ENCODE measurements at regions of chr14 and their contacts with region 1.

Region 1: GRCh38 chr14:67571272-67571850 is 28.7 kb downstream of the PIGH start:
- DNase-seq: peak; percentile 84
- H3K4me3 Mint-ChIP-seq: no peak overlapping the region
- H3K27ac Mint-ChIP-seq: no peak overlapping the region
- H3K4me1 Mint-ChIP-seq: no peaks in the 10 kb centered on the region
- H3K27me3 Mint-ChIP-seq: no peaks in the 10 kb centered on the region

Region 2: DNA sequence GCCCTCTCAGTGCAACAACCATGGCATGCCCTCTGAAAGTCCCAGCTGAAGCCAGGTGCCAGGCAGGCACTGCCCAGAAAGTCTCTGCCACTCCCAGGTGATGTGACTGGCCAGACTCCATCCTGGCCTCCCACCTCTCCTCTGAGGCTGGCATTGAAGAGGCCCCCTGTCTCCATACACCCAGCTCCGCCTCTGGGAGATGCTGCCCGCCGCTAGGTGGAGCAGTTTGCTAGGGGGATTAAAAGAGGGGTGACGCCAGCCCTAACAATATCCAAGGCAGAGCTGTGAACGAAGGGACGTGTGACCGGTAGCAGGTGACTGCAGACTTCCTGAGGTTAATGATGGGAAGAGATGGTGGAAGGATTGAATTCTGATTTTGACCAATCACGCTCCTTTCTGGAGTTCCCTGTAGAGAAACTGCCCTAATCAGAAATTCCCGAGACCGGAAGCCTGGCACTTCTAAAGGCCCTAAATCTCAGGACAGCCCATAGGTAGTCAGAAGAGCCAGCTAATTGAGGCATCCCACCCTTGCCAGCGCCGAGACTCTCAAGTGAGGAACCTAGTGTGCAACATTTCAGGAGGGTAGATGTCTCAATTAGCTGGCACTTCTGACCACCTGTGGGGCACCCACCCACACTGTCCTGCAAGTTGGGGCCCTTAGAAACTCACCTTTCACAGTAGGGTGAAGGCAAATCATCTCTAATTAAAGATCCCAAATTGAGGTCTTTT is 151.1 kb before region 1 on chr14:
- CTCF ChIA-PET with region 1: interaction called, 191 read pairs
- intact Hi-C with region 1: no loop called
- DNase-seq: peak; percentile 57
- H3K4me3 Mint-ChIP-seq: no peak overlapping the region
- H3K27ac Mint-ChIP-seq: no peak overlapping the region
- H3K4me1 Mint-ChIP-seq: no peaks in the 10 kb centered on the region
- H3K27me3 Mint-ChIP-seq: peaks cover 5% of the 10 kb centered on the region

Region 3: DNA sequence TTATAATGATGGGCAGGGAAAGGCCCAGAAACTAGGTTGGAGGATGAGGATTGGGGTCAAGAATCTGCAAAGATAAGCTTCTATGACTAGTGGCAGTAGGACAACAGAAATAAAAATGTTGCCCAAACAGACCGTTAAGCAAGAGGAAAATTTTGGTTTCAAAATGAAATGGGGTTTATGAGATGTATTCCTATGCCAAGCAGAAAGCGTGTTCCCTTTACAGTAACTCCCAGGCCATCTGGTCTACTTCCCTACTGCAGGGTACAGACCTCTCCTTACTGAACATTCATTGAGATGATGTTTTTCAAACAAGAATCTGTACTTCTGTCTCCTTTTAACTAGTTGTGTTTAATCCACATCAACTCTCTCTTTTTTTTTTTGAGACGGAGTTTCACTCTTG is 62.4 kb before region 1 on chr14:
- CTCF ChIA-PET with region 1: interaction called, 10 read pairs
- intact Hi-C with region 1: no loop called
- DNase-seq: no peak
- H3K4me3 Mint-ChIP-seq: no peak overlapping the region
- H3K27ac Mint-ChIP-seq: no peak overlapping the region
- H3K4me1 Mint-ChIP-seq: peaks cover 5% of the 10 kb centered on the region
- H3K27me3 Mint-ChIP-seq: no peaks in the 10 kb centered on the region

Region 4: GRCh38 chr14:67557126-67557525 is 14.2 kb before region 1 on chr14:
- CTCF ChIA-PET with region 1: interaction called, 14 read pairs
- intact Hi-C with region 1: no loop called
- DNase-seq: no peak
- H3K4me3 Mint-ChIP-seq: no peak overlapping the region
- H3K27ac Mint-ChIP-seq: no peak overlapping the region
- H3K4me1 Mint-ChIP-seq: no peaks in the 10 kb centered on the region
- H3K27me3 Mint-ChIP-seq: no peaks in the 10 kb centered on the region

Region 5: DNA sequence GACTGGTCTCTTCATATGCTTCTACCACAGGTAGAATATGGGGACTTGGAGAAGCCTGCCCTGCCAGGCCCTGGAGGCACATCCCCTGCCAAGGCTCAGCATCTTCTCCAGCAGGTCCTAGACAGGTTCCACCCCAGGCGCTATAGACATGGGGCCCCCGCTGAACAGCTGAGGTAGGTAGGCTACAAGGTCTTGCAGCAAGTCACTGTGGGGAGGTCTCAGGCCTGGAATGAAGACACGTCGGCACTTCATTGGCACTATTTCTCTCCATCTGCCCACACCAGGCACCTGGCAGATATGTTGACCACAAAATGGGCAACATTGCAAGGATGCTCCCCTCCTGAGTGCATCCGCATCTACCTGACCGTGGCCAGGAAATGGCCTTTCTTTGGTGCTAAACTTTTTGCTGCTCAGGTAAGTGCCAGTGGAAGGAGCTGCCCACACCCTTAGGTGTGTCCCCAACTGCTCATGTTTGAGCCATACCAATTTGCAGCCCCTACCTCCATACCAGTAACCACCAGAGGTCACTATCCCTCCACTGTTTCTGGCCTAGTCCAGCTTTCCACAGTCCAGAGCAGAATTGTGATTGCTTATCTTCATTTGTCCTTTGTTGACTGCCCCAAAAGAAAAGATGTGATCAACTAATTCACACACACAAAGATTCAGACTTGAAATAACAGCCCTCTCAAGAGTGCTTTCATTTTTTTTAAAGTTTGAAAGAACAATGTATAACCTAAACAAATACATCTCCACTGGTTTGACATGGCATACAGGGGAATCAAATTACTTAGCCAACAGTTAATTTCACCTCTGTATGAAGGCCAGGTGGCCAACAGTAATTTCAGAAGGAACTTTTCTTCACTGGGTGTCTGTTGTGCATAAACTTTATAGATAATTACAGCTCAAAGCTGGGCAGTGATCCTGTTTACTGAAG is 12.6 kb after region 1 on chr14:
- CTCF ChIA-PET with region 1: interaction called, 24 read pairs
- intact Hi-C with region 1: no loop called
- DNase-seq: peak; percentile 61
- H3K4me3 Mint-ChIP-seq: no peak overlapping the region
- H3K27ac Mint-ChIP-seq: no peak overlapping the region
- H3K4me1 Mint-ChIP-seq: no peaks in the 10 kb centered on the region
- H3K27me3 Mint-ChIP-seq: no peaks in the 10 kb centered on the region

Region 6: GRCh38 chr14:67729072-67729885 is 157.9 kb after region 1 on chr14:
- CTCF ChIA-PET with region 1: no interaction called
- intact Hi-C with region 1: no loop called
- DNase-seq: no peak
- H3K4me3 Mint-ChIP-seq: no peak overlapping the region
- H3K27ac Mint-ChIP-seq: no peak overlapping the region
- H3K4me1 Mint-ChIP-seq: no peaks in the 10 kb centered on the region
- H3K27me3 Mint-ChIP-seq: peaks cover 4% of the 10 kb centered on the region